ENCODE measurements at regions of chr1 and their contacts with region 1.

Region 1: DNA sequence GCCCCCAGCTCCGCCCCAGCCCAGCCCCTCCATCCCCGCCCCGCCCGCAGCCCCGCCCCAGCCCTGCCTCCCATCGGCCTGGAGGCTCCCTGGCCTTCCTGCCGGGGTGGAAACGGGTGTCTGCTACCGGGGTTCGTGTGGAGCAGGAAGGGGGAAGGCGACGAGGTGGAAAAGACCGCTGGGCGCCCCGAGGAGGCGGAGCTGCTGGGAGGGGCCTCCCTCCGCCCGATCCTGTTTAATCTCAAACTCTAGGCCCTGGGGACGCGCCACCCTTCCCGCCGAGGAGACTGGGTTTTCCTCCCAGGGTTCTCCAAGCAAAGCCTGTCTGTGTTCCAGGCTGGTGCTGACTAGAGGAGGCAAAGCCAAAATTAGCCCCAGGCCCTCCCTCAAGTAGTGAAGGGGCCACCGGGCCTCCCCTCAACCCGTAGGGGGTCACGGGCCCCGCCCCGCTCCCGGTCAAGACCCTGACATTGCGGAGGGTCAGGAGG is 16.2 kb upstream of the TTLL10 start:
- DNase-seq: peak; percentile 10 to 76 (median 48)
- ATAC-seq: peak; percentile 70 to 72
- H3K4me3 Mint-ChIP-seq: peak overlapping the region; percentile 72 to 89 (median 80)
- H3K27ac Mint-ChIP-seq: peak overlapping the region; percentile 16 to 92 (median 76)
- H3K4me1 Mint-ChIP-seq: peaks cover 0 to 8% (median 4%) of the 10 kb centered on the region in 4 donors
- H3K27me3 Mint-ChIP-seq: no peaks in the 10 kb centered on the region

Region 2: DNA sequence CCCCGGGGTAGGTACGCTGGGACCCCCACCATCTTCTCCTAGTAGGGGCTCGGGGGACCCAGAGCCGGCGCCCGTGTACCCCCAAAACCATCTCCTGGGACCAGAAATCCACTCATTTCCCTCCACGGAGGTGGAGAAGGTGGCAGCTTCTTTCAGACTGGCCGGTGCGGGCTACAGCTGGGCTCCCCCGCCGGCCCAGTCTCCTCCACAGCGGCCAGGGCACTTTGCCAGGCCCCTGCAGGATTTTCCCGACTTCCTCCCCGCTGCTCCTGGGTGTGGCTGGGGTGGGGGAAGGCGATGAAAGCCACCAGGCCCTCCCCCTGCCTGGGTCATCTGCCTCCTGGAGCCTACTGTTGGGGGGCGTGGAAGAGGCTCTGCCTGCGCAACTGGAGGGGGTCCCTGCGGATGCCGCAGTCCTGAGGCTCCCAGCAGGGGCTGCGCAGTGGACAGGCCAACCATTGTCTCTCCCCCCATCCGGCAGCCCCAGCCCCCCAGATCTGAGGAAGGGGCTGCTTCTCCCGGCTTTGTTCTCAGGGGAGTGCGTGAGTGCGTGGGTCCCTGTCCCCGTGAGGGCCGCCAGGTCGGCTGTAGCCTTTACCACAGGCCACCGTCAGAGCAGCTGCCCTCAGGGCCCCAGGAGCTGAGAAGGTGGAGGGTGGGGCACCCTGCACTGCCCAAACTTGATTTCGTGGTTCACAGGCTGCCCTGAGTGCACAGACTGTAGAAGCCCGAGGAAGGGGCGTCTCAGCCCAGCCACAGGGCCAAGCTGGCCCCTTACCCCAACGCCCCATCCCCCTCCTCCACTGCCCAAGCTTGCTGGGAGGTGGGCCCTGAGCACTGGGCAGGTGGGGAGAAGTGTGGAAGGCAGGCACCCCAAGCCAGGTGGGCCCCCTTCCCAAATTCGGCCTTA is 136.2 kb before region 1 on chr1:
- POLR2A ChIA-PET with region 1: interaction called, 11 read pairs
- DNase-seq: no peak
- ATAC-seq: no peak
- H3K4me3 Mint-ChIP-seq: peak overlapping the region in 8 of 10 donors; percentile 22 to 68 (median 54)
- H3K27ac Mint-ChIP-seq: peak overlapping the region in 2 of 10 donors; percentile 31 to 56
- H3K4me1 Mint-ChIP-seq: peaks cover 5 to 23% (median 18%) of the 10 kb centered on the region in 4 donors
- H3K27me3 Mint-ChIP-seq: no peaks in the 10 kb centered on the region

Region 3: DNA sequence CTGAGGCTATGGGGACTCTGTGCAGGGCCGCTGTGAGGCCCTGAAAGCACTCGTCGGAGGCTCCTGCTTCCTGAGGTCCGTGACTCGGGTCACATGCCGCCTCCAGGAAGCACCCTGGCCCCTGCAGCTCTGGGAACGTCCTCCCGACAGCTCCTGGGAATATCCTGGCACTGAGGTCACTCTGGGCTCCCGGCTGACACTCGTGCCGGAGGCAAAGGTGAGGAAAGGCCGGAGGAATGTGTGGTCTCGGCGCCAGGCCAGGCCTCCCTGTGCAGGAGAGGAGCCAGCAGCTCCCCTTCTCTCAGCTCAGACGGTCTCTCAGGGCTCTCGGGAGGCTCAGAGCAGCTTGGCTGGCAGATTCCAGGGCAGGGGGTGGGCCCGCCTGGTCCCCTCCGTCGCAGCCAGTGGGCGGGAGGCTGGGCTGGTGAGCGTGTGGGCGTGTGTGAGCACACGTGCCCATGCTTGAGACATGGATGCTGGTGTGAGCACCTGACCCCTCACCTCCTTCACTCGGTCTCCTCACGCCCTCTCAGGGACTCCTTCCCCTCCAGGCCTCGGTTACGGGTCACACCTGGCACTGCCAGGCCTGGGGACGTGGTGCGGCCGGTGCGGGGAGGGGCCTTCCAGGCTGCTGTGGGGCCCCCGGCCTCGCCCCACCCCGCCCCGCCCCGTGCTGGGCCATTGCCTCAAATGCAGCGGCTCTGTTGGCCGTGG is 77.9 kb before region 1 on chr1:
- POLR2A ChIA-PET with region 1: no interaction called
- DNase-seq: peak in 5 of 10 donors; percentile 33 to 62 (median 40)
- ATAC-seq: peak; percentile 82 to 86
- H3K4me3 Mint-ChIP-seq: peak overlapping the region in 9 of 10 donors; percentile 19 to 72 (median 58)
- H3K27ac Mint-ChIP-seq: no peak overlapping the region
- H3K4me1 Mint-ChIP-seq: peaks cover 0 to 5% (median 1%) of the 10 kb centered on the region in 4 donors
- H3K27me3 Mint-ChIP-seq: peaks cover 3 to 7% (median 3%) of the 10 kb centered on the region in 5 donors

Region 4: GRCh38 chr1:1092890-1093609 is 64.4 kb before region 1 on chr1:
- POLR2A ChIA-PET with region 1: no interaction called
- DNase-seq: no peak
- ATAC-seq: no peak
- H3K4me3 Mint-ChIP-seq: no peak overlapping the region
- H3K27ac Mint-ChIP-seq: peak overlapping the region in 1 of 10 donors; percentile 63
- H3K4me1 Mint-ChIP-seq: peaks cover 0 to 10% (median 4%) of the 10 kb centered on the region in 4 donors
- H3K27me3 Mint-ChIP-seq: no peaks in the 10 kb centered on the region

Region 5: GRCh38 chr1:1115786-1116700 is 41.4 kb before region 1 on chr1 and contains the start of gene C1orf159:
- POLR2A ChIA-PET with region 1: no interaction called
- DNase-seq: peak; percentile 96 to 99 (median 98)
- ATAC-seq: peak; percentile 93
- H3K4me3 Mint-ChIP-seq: peak within 1 kb of the TSS; percentile 83 to 95 (median 89)
- H3K27ac Mint-ChIP-seq: peak within 1 kb of the TSS in 9 of 10 donors; percentile 51 to 94 (median 81)
- H3K4me1 Mint-ChIP-seq: peaks cover 6 to 20% (median 13%) of the 10 kb centered on the region in 4 donors
- H3K27me3 Mint-ChIP-seq: peaks cover 0 to 3% (median 0%) of the 10 kb centered on the region in 5 donors
- polyA plus RNA-seq, gene C1orf159: 3.2 to 10.7 (median 6.2) TPM

Region 6: DNA sequence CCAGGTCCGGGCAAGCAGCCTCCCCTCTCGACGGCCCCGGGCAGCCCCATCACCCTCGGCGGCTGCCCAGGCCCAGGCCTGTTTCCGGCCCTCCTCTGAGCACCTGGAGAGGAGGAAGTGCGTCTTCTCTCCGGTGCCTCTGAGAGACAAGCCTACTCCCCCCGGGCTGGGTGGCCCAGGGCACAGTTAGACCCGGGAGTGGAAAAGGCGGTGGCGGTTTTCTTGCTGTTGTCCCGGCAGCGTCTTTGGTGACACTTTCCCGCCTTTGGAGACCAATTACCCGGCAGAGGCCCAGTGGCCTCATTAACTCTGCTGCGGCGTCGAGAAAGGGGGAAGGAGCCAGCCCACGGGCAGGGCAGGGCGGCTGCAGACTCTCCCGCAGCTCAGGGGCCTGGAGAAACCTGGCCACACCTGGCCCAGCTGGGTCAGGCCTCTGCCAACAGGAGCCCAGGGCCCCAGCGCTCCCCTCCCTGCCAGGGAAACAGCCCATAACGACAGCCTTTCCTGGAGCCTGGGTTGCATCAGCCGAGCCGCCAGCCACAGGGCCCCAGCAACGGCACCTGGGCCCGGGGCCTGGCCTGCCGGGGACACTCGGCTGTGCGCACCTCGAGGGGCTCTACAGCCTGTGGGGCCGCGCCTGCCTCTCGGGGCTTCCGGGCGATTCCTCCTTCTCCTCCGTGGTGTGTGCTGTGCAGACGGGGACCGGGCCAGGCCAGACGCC is 13.2 kb before region 1 on chr1:
- POLR2A ChIA-PET with region 1: interaction called, 10 read pairs
- DNase-seq: peak; percentile 51 to 87 (median 66)
- ATAC-seq: peak; percentile 94 to 99
- H3K4me3 Mint-ChIP-seq: peak overlapping the region; percentile 28 to 83 (median 61)
- H3K27ac Mint-ChIP-seq: peak overlapping the region; percentile 93 to 98 (median 96)
- H3K4me1 Mint-ChIP-seq: peaks cover 4 to 29% (median 19%) of the 10 kb centered on the region in 4 donors
- H3K27me3 Mint-ChIP-seq: no peaks in the 10 kb centered on the region

Region 7: GRCh38 chr1:1171546-1172340 is 14.3 kb after region 1 on chr1:
- POLR2A ChIA-PET with region 1: interaction called, 11 read pairs
- DNase-seq: peak; percentile 5 to 75 (median 52)
- ATAC-seq: peak; percentile 69 to 72
- H3K4me3 Mint-ChIP-seq: peak overlapping the region; percentile 12 to 81 (median 62)
- H3K27ac Mint-ChIP-seq: peak overlapping the region in 8 of 10 donors; percentile 56 to 97 (median 74)
- H3K4me1 Mint-ChIP-seq: peaks cover 7 to 33% (median 18%) of the 10 kb centered on the region in 4 donors
- H3K27me3 Mint-ChIP-seq: peaks cover 0 to 6% (median under 1%) of the 10 kb centered on the region in 5 donors

Measured in naive thymus-derived CD8-positive, alpha-beta T cell (primary cell).